ENCODE measurements at regions of chr7 and their contacts with region 1.

Region 1: DNA sequence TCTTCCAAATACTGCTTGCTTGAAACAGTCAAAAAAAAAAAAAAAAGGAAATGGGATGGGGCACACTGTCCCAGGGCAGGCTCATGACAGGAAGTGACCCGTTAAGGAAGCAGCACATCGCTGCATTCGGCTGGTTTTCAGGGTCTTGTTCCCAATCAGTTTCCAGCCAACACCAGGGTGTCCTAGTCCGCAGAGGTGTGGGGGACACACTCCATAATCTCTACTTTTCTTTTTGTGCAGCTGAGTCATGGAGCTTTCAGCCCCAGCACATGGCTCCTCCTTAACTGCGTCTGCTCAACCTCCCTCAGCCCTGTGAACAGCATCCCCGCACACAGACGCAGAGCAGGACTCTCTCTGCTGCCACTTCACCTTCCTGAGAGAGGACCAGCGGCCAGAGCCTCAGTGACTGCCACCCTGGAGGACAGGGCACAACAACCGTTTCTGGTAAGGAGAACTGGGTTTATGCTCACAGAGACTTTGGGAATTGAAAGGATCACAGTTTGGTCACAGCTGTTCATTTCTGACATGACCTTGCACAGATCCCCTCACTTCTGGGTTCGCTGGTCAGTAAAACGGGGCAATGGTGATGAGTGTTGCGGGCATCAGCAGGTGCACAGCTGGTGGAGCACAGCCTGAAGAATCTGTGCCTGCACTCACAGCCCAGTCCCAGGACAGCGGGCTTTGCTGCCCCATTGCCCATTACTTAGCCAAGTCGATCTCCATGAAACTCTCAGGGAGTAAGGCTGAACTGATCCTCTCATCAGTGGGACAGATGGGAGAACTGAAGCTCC is at the start of gene GIMAP5:
- DNase-seq: peak in 12 of 14 experiments; percentile 29 to 78 (median 70)
- ATAC-seq: peak; percentile 75
- H3K4me3 ChIP-seq: peak within 1 kb of the TSS; percentile 65
- H3K4me3 Mint-ChIP-seq: peak within 1 kb of the TSS; percentile 96
- H3K27ac ChIP-seq: peak within 1 kb of the TSS; percentile 80 to 87
- H3K27ac Mint-ChIP-seq: peak within 1 kb of the TSS; percentile 87
- H3K4me1 ChIP-seq: peaks cover 59% of the 10 kb centered on the region
- H3K4me1 Mint-ChIP-seq: peaks cover 74% of the 10 kb centered on the region
- H3K27me3 ChIP-seq: no peaks in the 10 kb centered on the region
- H3K27me3 Mint-ChIP-seq: no peaks in the 10 kb centered on the region
- CTCF ChIP-seq: no peak
- total RNA-seq, gene GIMAP5: 31.3 to 35.2 TPM

Region 2: GRCh38 chr7:150368096-150368883 is 369.2 kb before region 1 on chr7 and contains the start of gene REPIN1:
- CTCF ChIA-PET with region 1: no interaction called
- POLR2A ChIA-PET with region 1: no interaction called
- intact Hi-C with region 1: loop called in 1 of 2 experiments (anchors 5 kb)
- DNase-seq: peak; percentile 58 to 91 (median 73)
- ATAC-seq: peak; percentile 45
- H3K4me3 ChIP-seq: peak within 1 kb of the TSS; percentile 83
- H3K4me3 Mint-ChIP-seq: peak within 1 kb of the TSS; percentile 99
- H3K27ac ChIP-seq: peak within 1 kb of the TSS; percentile 40 to 80
- H3K27ac Mint-ChIP-seq: peak within 1 kb of the TSS; percentile 96
- H3K4me1 ChIP-seq: peaks cover 47% of the 10 kb centered on the region
- H3K4me1 Mint-ChIP-seq: peaks cover 61% of the 10 kb centered on the region
- H3K27me3 ChIP-seq: no peaks in the 10 kb centered on the region
- H3K27me3 Mint-ChIP-seq: no peaks in the 10 kb centered on the region
- CTCF ChIP-seq: no peak
- total RNA-seq, gene REPIN1: 58.2 to 59.8 TPM

Region 3: DNA sequence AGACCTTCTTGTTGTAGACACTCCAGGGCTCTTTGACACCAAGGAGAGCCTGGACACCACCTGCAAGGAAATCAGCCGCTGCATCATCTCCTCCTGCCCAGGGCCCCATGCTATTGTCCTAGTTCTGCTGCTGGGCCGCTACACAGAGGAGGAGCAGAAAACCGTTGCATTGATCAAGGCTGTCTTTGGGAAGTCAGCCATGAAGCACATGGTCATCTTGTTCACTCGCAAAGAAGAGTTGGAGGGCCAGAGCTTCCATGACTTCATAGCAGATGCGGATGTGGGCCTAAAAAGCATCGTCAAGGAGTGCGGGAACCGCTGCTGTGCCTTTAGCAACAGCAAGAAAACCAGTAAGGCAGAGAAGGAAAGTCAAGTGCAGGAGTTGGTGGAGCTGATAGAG is 217.3 kb before region 1 on chr7:
- CTCF ChIA-PET with region 1: interaction called, 5 read pairs
- POLR2A ChIA-PET with region 1: interaction called, 39 read pairs
- intact Hi-C with region 1: loop called (anchors 2 to 5 kb)
- DNase-seq: peak in 9 of 14 experiments; percentile 23 to 59 (median 47)
- ATAC-seq: peak; percentile 33
- H3K4me3 ChIP-seq: peak overlapping the region; percentile 79
- H3K4me3 Mint-ChIP-seq: peak overlapping the region; percentile 100
- H3K27ac ChIP-seq: peak overlapping the region; percentile 59 to 60
- H3K27ac Mint-ChIP-seq: peak overlapping the region; percentile 93
- H3K4me1 ChIP-seq: peaks cover 12% of the 10 kb centered on the region
- H3K4me1 Mint-ChIP-seq: peaks cover 36% of the 10 kb centered on the region
- H3K27me3 ChIP-seq: no peaks in the 10 kb centered on the region
- H3K27me3 Mint-ChIP-seq: no peaks in the 10 kb centered on the region
- CTCF ChIP-seq: no peak

Region 4: DNA sequence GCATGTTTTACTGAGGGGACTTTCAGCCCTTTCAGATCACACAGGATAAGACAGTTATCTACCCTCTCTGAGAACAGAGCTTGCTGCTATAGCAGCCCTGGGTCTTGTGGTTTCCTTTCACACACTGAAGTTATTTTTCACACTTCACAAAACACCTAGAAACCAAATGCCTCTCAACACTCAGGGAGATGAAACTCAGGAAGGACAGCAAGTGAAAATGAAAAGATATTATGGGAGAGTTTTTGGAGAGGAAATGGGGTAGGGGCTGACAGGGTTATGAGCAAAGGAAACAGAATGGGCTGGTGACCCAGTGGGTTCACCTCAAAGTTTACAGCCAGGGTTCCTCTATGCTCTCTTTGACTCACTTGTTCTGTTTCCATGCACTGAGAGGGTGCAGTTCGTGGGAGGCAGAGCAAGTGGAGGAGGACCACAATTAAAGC is 69.0 kb before region 1 on chr7:
- CTCF ChIA-PET with region 1: no interaction called
- POLR2A ChIA-PET with region 1: interaction called, 14 read pairs
- intact Hi-C with region 1: loop called in 1 of 2 experiments (anchors 5 kb)
- DNase-seq: peak in 13 of 14 experiments; percentile 34 to 92 (median 51)
- ATAC-seq: peak; percentile 82
- H3K4me3 ChIP-seq: peak overlapping the region; percentile 4
- H3K4me3 Mint-ChIP-seq: peak overlapping the region; percentile 49
- H3K27ac ChIP-seq: peak overlapping the region; percentile 73 to 85
- H3K27ac Mint-ChIP-seq: peak overlapping the region; percentile 91
- H3K4me1 ChIP-seq: peaks cover 70% of the 10 kb centered on the region
- H3K4me1 Mint-ChIP-seq: peaks cover 94% of the 10 kb centered on the region
- H3K27me3 ChIP-seq: no peaks in the 10 kb centered on the region
- H3K27me3 Mint-ChIP-seq: no peaks in the 10 kb centered on the region
- CTCF ChIP-seq: no peak

Region 5: GRCh38 chr7:150722431-150722931 is 15.0 kb before region 1 on chr7:
- CTCF ChIA-PET with region 1: interaction called, 27 read pairs
- POLR2A ChIA-PET with region 1: interaction called, 88 read pairs
- intact Hi-C with region 1: loop called (anchors 1 to 2 kb)
- DNase-seq: no peak
- ATAC-seq: no peak
- H3K4me3 ChIP-seq: peak overlapping the region; percentile 13
- H3K4me3 Mint-ChIP-seq: peak overlapping the region; percentile 54
- H3K27ac ChIP-seq: peak overlapping the region; percentile 5 to 6
- H3K27ac Mint-ChIP-seq: peak overlapping the region; percentile 81
- H3K4me1 ChIP-seq: peaks cover 42% of the 10 kb centered on the region
- H3K4me1 Mint-ChIP-seq: peaks cover 78% of the 10 kb centered on the region
- H3K27me3 ChIP-seq: no peaks in the 10 kb centered on the region
- H3K27me3 Mint-ChIP-seq: no peaks in the 10 kb centered on the region
- CTCF ChIP-seq: no peak

Region 6: GRCh38 chr7:150748376-150748775 is 10.9 kb after region 1 on chr7:
- CTCF ChIA-PET with region 1: interaction called, 4 read pairs
- POLR2A ChIA-PET with region 1: interaction called, 120 read pairs
- intact Hi-C with region 1: no loop called
- DNase-seq: peak in 3 of 14 experiments; percentile 54 to 58 (median 57)
- ATAC-seq: peak; percentile 61
- H3K4me3 ChIP-seq: peak overlapping the region; percentile 31
- H3K4me3 Mint-ChIP-seq: peak overlapping the region; percentile 40
- H3K27ac ChIP-seq: peak overlapping the region; percentile 65 to 69
- H3K27ac Mint-ChIP-seq: peak overlapping the region; percentile 87
- H3K4me1 ChIP-seq: peaks cover 93% of the 10 kb centered on the region
- H3K4me1 Mint-ChIP-seq: peaks cover 94% of the 10 kb centered on the region
- H3K27me3 ChIP-seq: no peaks in the 10 kb centered on the region
- H3K27me3 Mint-ChIP-seq: no peaks in the 10 kb centered on the region
- CTCF ChIP-seq: no peak

Region 7: GRCh38 chr7:150838970-150839650 is 101.7 kb after region 1 on chr7:
- CTCF ChIA-PET with region 1: no interaction called
- POLR2A ChIA-PET with region 1: no interaction called
- intact Hi-C with region 1: no loop called
- DNase-seq: no peak
- ATAC-seq: no peak
- H3K4me3 ChIP-seq: no peak overlapping the region
- H3K4me3 Mint-ChIP-seq: no peak overlapping the region
- H3K27ac ChIP-seq: no peak overlapping the region
- H3K27ac Mint-ChIP-seq: no peak overlapping the region
- H3K4me1 ChIP-seq: no peaks in the 10 kb centered on the region
- H3K4me1 Mint-ChIP-seq: no peaks in the 10 kb centered on the region
- H3K27me3 ChIP-seq: peaks cover 0 to 1% of the 10 kb centered on the region in 2 experiments
- H3K27me3 Mint-ChIP-seq: peaks cover 7% of the 10 kb centered on the region
- CTCF ChIP-seq: no peak